ENCODE measurements at regions of chr19 and their contacts with region 1.

Region 1: DNA sequence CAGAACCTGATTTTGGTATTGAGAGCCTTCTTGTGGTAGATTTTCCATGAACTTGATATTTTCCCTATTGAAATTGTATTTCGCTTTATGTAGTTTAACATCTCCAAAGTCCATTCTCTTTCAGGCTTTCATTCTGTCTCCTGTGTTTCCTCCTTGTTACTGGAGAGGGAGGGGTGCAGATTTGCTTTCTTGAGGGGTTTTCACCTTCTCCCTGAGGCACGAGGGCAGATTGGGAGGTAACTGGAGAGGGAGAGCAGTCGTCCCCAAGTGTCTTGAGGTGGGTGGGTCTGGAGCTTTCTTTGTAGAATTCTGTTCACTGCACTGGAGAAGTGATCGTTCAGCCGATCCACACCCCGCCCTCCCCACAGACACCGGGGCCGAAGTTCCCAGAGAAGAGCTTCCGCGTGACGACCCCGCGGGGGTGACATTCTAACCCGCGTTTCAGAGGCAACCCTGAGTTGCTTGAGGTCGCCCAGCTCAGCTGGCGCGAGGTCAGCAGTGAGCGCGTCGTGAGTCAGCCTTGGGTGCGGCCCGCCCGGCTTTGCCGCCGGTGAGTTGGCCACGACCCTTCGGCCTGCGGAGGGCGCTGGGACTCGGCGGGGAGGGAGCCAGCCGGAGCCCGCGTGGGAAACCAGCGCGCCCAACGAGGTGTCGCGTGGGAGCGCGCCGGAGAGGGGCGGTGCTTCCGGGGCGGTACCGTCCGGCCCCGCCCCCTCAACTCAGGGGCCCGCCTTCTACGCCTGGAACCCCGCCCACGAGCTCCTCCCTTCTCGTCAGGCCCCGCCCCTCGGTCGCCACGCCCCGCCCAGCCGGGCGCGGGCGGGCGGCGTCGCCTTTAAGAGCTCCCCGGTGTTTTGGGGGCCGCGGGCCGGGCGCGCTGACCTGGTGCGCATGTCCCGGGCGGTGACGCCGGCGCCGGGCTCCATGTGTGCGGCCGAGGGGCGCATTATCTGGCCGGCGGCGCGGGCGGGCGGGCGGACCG is at the start of gene GATAD2A:
- DNase-seq: peak; percentile 82 to 95 (median 92)
- ATAC-seq: peak; percentile 79 to 80
- H3K4me3 Mint-ChIP-seq: peak within 1 kb of the TSS; percentile 90 to 98 (median 94)
- H3K27ac Mint-ChIP-seq: peak within 1 kb of the TSS; percentile 83 to 97 (median 94)
- H3K4me1 Mint-ChIP-seq: peaks cover 37 to 72% (median 64%) of the 10 kb centered on the region in 4 donors
- H3K27me3 Mint-ChIP-seq: no peaks in the 10 kb centered on the region
- polyA plus RNA-seq, gene GATAD2A: 14.5 to 35.1 (median 20.2) TPM

Region 2: DNA sequence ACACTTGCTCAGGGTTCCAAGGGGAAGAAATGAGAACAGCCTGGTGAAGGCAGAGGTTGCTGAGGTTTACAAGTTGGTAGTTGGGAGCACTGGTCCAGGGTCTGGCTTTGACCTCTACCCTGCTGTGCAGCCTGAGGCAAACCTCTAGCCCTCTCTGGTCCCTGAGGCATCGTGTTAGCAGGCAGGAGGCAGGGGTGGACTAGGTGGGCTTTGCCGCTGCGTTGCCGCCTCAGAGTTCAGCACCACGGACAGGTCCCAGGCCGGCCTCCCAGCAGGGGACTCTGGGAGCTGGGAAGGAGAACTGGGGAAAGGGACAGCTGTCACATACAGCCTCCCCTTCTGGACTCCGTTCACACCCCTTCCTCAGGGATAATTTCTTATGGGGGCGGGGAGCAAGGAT is 190.3 kb before region 1 on chr19:
- POLR2A ChIA-PET with region 1: no interaction called
- DNase-seq: peak in 4 of 10 donors; percentile 26 to 48 (median 29)
- ATAC-seq: peak; percentile 32 to 33
- H3K4me3 Mint-ChIP-seq: no peak overlapping the region
- H3K27ac Mint-ChIP-seq: peak overlapping the region in 1 of 10 donors; percentile 8
- H3K4me1 Mint-ChIP-seq: peaks cover 0 to 5% (median 2%) of the 10 kb centered on the region in 4 donors
- H3K27me3 Mint-ChIP-seq: peaks cover 28 to 66% (median 39%) of the 10 kb centered on the region in 5 donors

Region 3: GRCh38 chr19:19256072-19256969 is 148.8 kb before region 1 on chr19:
- POLR2A ChIA-PET with region 1: no interaction called
- DNase-seq: no peak
- ATAC-seq: no peak
- H3K4me3 Mint-ChIP-seq: peak overlapping the region in 1 of 10 donors; percentile 29
- H3K27ac Mint-ChIP-seq: no peak overlapping the region
- H3K4me1 Mint-ChIP-seq: peaks cover 0 to 12% (median 4%) of the 10 kb centered on the region in 4 donors
- H3K27me3 Mint-ChIP-seq: peaks cover 34 to 79% (median 47%) of the 10 kb centered on the region in 5 donors

Region 4: DNA sequence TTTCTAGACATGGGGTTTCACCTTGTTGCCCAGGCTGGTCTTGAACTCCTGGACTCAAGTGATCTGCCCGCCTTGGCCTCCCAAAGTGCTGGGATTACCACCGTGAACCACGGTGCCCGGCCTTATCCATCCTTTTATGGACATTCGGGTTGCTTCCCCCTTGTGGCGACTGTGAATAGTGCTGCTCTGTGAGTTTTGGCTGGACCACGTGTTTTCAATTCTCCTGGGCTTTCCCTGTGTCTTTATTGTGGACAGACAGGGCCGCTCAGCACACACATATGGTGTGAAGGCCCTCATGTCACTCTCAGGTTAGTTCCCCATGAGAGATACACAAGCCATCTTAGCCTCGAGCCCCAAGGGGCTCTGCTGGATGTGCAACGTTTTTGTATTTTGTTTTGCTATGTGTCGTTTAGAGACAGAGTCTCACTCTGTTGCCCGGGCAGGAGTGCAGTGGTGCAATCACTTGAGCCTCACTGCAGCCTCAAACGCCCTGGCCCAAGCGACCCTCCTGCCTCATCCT is 44.0 kb before region 1 on chr19:
- POLR2A ChIA-PET with region 1: interaction called, 17 read pairs
- DNase-seq: peak; percentile 37 to 78 (median 64)
- ATAC-seq: peak; percentile 46 to 60
- H3K4me3 Mint-ChIP-seq: peak overlapping the region; percentile 12 to 62 (median 49)
- H3K27ac Mint-ChIP-seq: peak overlapping the region in 9 of 10 donors; percentile 28 to 86 (median 64)
- H3K4me1 Mint-ChIP-seq: peaks cover 21 to 52% (median 38%) of the 10 kb centered on the region in 4 donors
- H3K27me3 Mint-ChIP-seq: no peaks in the 10 kb centered on the region

Region 5: DNA sequence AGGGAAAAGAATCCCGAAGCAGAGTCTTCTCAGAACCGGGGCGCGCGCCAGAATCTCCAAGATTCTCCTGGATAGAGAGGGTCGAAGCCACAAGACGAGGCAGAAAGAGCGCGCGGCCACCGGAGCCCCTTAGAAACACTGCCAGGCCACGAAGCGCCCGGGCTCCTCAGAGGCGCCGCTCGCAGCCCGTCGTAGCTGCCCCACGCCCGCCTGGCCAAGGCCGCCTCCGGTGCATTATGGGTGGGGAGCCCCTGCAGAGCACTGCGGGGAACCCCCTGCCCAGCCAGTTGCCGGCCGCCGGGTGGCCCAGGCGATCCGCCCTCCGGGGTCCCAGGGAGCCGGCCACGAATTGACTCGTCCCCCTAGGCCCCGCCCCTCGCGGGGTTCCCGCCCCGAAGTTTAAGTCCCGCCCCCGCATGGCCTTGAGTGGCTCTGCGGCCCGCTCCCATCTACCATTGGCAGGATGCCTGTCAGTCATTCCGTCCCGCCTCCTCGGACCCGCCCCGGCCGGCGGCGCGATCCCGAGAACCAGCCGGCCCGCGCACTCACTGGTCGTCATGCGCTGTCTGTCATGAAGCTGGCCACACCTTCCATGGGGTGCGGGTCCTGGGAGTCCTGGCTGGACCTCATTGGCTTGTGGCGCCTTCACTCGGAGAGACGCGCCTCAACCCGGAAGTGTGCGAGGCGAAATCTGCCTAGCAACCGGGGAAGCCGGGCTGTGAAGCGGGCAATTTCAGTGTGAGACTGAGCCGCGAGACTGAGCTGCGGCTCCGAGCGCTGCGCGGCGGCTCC is 19.9 kb before region 1 on chr19:
- POLR2A ChIA-PET with region 1: interaction called, 46 read pairs
- DNase-seq: peak; percentile 97 to 100 (median 99)
- ATAC-seq: peak; percentile 90
- H3K4me3 Mint-ChIP-seq: peak overlapping the region; percentile 85 to 100 (median 92)
- H3K27ac Mint-ChIP-seq: peak overlapping the region; percentile 86 to 96 (median 94)
- H3K4me1 Mint-ChIP-seq: peaks cover 27 to 47% (median 44%) of the 10 kb centered on the region in 4 donors
- H3K27me3 Mint-ChIP-seq: no peaks in the 10 kb centered on the region

Region 6: DNA sequence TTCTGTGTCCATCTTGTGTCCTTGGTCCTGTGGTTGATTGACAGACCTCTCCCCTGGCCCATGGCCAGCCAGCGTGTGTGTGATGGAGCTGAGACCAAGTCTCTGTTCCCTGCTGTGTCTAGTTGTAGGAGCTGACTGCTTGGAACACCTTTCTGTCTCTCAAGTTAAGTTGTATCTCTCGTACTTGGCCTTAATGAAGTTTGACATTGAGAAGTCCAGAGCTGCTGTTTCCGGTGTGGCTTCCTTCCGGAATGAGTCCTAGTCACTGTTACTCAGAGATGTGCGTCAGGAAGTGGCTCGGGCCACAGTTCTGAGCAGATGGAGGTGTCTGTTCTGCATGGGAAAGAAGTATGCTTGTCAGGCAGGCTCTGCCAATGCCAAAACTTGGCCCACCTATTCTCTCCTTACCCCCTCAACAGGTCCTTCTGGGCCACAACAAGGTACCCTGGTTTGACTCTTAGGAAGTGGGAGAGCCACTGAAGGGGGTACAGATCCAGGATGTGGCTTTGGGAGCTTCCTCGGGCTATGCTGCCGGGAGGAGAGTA is 54.6 kb after region 1 on chr19:
- POLR2A ChIA-PET with region 1: interaction called, 26 read pairs
- DNase-seq: peak in 9 of 10 donors; percentile 49 to 76 (median 57)
- ATAC-seq: peak; percentile 58 to 68
- H3K4me3 Mint-ChIP-seq: peak overlapping the region; percentile 80 to 97 (median 89)
- H3K27ac Mint-ChIP-seq: peak overlapping the region; percentile 93 to 99 (median 98)
- H3K4me1 Mint-ChIP-seq: peaks cover 38 to 93% (median 83%) of the 10 kb centered on the region in 4 donors
- H3K27me3 Mint-ChIP-seq: no peaks in the 10 kb centered on the region